Activated naive CD8-positive, alpha-beta T cell treated with anti-CD3 and anti-CD28 coated beads, Interleukin-2, amount 10 ng/mL, durations not matched to agents 7 days and 5 days (primary cell): ENCODE measurements at regions of chr19 and their contacts with region 1.

Region 1: DNA sequence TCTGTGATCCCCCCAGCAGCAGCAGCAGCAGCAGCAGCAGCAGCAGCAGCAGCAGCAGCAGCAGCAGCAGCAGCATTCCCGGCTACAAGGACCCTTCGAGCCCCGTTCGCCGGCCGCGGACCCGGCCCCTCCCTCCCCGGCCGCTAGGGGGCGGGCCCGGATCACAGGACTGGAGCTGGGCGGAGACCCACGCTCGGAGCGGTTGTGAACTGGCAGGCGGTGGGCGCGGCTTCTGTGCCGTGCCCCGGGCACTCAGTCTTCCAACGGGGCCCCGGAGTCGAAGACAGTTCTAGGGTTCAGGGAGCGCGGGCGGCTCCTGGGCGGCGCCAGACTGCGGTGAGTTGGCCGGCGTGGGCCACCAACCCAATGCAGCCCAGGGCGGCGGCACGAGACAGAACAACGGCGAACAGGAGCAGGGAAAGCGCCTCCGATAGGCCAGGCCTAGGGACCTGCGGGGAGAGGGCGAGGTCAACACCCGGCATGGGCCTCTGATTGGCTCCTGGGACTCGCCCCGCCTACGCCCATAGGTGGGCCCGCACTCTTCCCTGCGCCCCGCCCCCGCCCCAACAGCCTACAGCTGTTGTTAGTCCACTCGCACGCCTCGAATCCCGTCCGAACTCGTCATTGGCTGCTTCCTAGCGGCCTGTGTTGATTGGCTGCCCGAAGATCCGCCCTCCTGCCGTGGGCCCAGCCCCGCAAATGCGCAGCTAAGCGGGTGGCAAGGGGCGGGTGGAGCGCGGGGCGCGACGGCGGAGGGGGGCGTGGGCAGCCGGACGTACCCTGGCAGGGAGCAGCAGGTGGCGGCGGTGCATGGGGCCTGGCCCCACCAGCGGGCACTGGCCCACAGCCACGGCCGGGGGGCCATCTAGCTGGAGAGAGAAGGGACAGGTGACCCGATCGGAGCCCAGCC is 1.4 kb upstream of the SIX5 start:
- DNase-seq: peak; percentile 96
- ATAC-seq: peak; percentile 71
- H3K4me3 Mint-ChIP-seq: peak overlapping the region; percentile 91
- H3K27ac Mint-ChIP-seq: peak overlapping the region; percentile 86
- H3K4me1 Mint-ChIP-seq: peaks cover 5% of the 10 kb centered on the region
- H3K27me3 Mint-ChIP-seq: peaks cover 11% of the 10 kb centered on the region

Region 2: GRCh38 chr19:45681391-45682015 is 88.9 kb before region 1 on chr19:
- POLR2A ChIA-PET with region 1: no interaction called
- DNase-seq: peak; percentile 94
- ATAC-seq: peak; percentile 88
- H3K4me3 Mint-ChIP-seq: peak overlapping the region; percentile 86
- H3K27ac Mint-ChIP-seq: peak overlapping the region; percentile 88
- H3K4me1 Mint-ChIP-seq: peaks cover 12% of the 10 kb centered on the region
- H3K27me3 Mint-ChIP-seq: peaks cover 2% of the 10 kb centered on the region

Region 3: GRCh38 chr19:45692187-45693105 is 78.0 kb before region 1 on chr19 and contains the start of gene QPCTL:
- POLR2A ChIA-PET with region 1: interaction called, 11 read pairs
- DNase-seq: peak; percentile 91
- ATAC-seq: peak; percentile 94
- H3K4me3 Mint-ChIP-seq: peak within 1 kb of the TSS; percentile 90
- H3K27ac Mint-ChIP-seq: peak within 1 kb of the TSS; percentile 86
- H3K4me1 Mint-ChIP-seq: peaks cover 15% of the 10 kb centered on the region
- H3K27me3 Mint-ChIP-seq: no peaks in the 10 kb centered on the region
- total RNA-seq, gene QPCTL: 9.3 to 9.7 TPM

Region 4: DNA sequence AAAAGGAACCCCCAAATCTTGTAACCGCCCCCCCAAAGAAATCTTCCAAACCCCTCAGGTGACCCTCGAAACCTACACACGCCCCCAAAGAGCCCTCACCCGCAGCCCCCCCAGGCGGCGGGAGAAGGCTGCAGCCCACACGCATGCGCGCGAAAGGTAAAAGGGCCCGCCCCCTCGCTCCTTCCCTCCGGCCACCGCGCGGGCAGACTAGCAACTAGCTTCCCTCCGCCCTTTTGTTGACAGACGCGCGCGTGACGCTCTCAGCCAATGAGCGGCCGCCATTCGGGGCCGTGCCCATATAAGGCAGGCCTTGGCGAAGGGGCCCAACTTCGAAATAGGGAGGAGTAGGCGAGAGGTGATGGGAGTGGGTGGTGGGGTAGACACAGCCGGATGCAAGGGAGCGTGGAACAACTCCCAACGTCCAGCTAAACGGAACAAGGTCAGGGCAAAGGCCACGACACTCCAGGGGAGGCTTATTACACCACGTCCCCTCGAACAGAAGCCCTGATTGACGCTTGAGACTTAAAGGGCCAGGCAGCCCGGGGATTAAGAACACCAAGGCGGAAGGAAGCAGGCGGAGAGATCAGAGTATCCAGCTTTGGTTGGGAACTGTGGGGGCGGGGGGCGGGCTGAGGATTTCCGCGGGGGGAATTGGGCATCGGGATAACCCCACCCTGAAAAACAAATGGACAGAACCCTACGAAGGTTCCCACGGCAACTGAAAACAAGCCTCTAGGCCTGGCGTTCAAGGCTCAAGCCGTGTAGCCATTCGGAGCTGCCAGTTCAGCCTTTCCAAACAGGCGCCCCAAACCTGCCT is 53.1 kb before region 1 on chr19:
- POLR2A ChIA-PET with region 1: interaction called, 10 read pairs
- DNase-seq: peak; percentile 96
- ATAC-seq: peak; percentile 99
- H3K4me3 Mint-ChIP-seq: peak overlapping the region; percentile 95
- H3K27ac Mint-ChIP-seq: peak overlapping the region; percentile 89
- H3K4me1 Mint-ChIP-seq: peaks cover 23% of the 10 kb centered on the region
- H3K27me3 Mint-ChIP-seq: no peaks in the 10 kb centered on the region

Region 5: GRCh38 chr19:45730389-45731288 is 39.8 kb before region 1 on chr19 and contains the start of gene FBXO46:
- POLR2A ChIA-PET with region 1: interaction called, 16 read pairs
- DNase-seq: peak; percentile 86
- ATAC-seq: peak; percentile 98
- H3K4me3 Mint-ChIP-seq: peak within 1 kb of the TSS; percentile 100
- H3K27ac Mint-ChIP-seq: peak within 1 kb of the TSS; percentile 95
- H3K4me1 Mint-ChIP-seq: peaks cover 21% of the 10 kb centered on the region
- H3K27me3 Mint-ChIP-seq: peaks cover 9% of the 10 kb centered on the region
- total RNA-seq, gene FBXO46: 29.9 to 35.5 TPM

Region 6: GRCh38 chr19:45754323-45754722 is 16.1 kb before region 1 on chr19:
- POLR2A ChIA-PET with region 1: no interaction called
- DNase-seq: no peak
- ATAC-seq: no peak
- H3K4me3 Mint-ChIP-seq: no peak overlapping the region
- H3K27ac Mint-ChIP-seq: no peak overlapping the region
- H3K4me1 Mint-ChIP-seq: no peaks in the 10 kb centered on the region
- H3K27me3 Mint-ChIP-seq: peaks cover 2% of the 10 kb centered on the region

Region 7: GRCh38 chr19:45792470-45793177 is 22.2 kb after region 1 on chr19 and contains the start of gene DMWD:
- POLR2A ChIA-PET with region 1: interaction called, 17 read pairs
- DNase-seq: peak; percentile 100
- ATAC-seq: peak; percentile 79
- H3K4me3 Mint-ChIP-seq: peak within 1 kb of the TSS; percentile 88
- H3K27ac Mint-ChIP-seq: peak within 1 kb of the TSS; percentile 71
- H3K4me1 Mint-ChIP-seq: peaks cover 28% of the 10 kb centered on the region
- H3K27me3 Mint-ChIP-seq: peaks cover 64% of the 10 kb centered on the region
- total RNA-seq, gene DMWD: 47.0 to 50.6 TPM

Region 8: DNA sequence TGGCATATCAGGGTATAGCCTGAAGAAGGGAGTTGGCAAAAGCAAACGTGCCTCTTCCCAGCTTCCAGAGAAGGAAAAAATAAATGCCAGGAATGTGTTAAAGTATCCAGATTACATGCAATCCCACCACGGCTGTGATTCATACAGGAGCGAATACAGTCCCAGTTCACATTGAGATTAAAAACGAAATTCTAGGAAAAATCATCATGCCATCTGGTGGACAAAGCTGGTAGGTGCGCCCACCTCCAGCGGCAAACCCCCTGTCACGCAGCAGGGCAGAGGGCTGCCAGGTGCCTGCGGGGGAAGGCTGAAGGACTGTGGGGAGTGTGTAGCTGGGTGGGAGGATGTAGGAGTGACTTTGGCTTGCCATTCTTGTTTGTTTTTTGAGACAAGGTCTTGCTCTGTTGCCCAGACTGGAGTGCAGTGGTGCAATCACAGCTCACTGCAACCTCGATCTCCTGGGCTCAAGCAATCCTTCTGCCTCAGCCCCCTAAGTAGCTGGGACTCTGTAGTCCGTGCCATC is 28.6 kb after region 1 on chr19:
- POLR2A ChIA-PET with region 1: interaction called, 37 read pairs
- DNase-seq: peak; percentile 63
- ATAC-seq: peak; percentile 69
- H3K4me3 Mint-ChIP-seq: no peak overlapping the region
- H3K27ac Mint-ChIP-seq: no peak overlapping the region
- H3K4me1 Mint-ChIP-seq: peaks cover 6% of the 10 kb centered on the region
- H3K27me3 Mint-ChIP-seq: peaks cover 59% of the 10 kb centered on the region

Region 9: GRCh38 chr19:45870798-45871197 is 100.4 kb after region 1 on chr19:
- POLR2A ChIA-PET with region 1: no interaction called
- DNase-seq: no peak
- ATAC-seq: no peak
- H3K4me3 Mint-ChIP-seq: no peak overlapping the region
- H3K27ac Mint-ChIP-seq: no peak overlapping the region
- H3K4me1 Mint-ChIP-seq: no peaks in the 10 kb centered on the region
- H3K27me3 Mint-ChIP-seq: peaks cover 23% of the 10 kb centered on the region

Region 10: DNA sequence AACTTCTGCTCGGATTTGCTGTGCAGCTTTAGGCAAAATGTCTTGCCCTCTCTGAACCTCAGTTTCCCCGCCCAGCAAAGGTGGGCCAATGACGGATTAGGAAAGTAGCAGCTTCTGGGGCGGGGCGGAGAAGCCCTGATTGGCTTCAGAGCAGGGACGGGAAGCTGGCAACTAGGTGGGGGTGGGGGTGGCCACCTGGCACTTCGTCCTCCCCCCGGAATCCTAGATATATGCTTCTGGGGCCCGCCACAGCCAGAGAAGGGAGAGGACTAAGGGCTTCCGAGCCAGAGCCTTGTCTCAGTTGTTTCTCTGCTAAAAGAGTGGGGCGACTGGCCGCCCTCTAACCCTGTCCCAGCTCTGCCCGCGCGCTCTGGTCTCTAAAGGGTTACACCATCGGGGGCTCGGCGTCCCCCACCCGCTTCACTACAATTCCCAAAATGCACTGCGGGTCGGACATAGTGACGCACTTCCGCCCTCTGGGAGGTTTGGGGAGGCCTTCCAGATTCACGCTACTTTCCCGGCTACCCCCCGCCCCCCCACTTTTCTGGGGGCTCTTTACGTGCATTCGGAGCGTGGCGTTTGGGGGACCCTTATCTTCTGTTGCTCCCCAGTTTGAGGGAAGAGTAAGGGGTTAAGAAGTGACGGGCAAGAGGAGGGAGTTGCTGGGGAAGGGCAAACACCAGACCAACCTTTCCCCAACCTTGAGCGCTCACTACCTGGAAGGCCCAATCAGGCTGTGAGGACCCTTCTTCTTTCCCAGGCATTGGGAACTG is 116.2 kb after region 1 on chr19:
- POLR2A ChIA-PET with region 1: interaction called, 12 read pairs
- DNase-seq: peak; percentile 88
- ATAC-seq: peak; percentile 83
- H3K4me3 Mint-ChIP-seq: peak overlapping the region; percentile 90
- H3K27ac Mint-ChIP-seq: peak overlapping the region; percentile 94
- H3K4me1 Mint-ChIP-seq: peaks cover 17% of the 10 kb centered on the region
- H3K27me3 Mint-ChIP-seq: no peaks in the 10 kb centered on the region